Endothelial cell of umbilical vein (primary cell): ENCODE measurements at regions of chr2 and their contacts with region 1.

Region 1: DNA sequence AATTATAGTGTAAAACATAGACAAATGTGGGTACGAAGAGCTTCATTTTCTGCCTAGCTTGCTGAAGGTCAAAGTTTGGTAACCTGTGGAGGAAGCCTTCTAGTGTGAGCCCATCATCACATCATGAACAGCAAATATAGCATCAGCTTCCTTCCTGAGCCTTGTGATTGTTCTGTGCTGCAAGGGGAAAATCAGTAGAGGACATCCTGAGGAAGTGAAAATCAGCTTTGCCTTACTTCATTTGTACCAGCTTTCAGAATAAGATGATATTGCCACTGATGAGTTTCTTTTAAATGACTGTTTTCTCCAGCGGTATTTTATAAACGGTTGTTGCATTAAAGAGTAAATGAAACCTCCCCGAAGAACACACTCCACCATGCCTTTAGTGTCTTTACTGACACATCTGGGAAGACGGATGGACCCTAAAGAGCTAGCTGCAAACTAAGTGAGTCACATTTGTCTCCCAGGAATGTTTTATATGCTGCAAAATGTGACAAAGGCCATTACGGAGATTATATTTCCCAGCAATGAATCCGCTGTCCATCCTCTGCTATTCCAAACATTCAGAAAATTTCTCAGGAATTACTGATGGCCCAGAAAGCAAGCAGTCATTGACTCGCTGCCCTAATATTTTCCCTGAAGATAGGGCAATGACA is 1272.8 kb downstream of the SUCLG1 start:
- DNase-seq: peak; percentile 84
- H3K4me3 ChIP-seq: peak overlapping the region in 2 of 3 experiments; percentile 5 to 41
- H3K27ac ChIP-seq: peak overlapping the region; percentile 84
- H3K4me1 ChIP-seq: peaks cover 24% of the 10 kb centered on the region
- H3K27me3 ChIP-seq: no peaks in the 10 kb centered on the region
- CTCF ChIP-seq: no peak
- POLR2A ChIP-seq: no peak

Region 2: DNA sequence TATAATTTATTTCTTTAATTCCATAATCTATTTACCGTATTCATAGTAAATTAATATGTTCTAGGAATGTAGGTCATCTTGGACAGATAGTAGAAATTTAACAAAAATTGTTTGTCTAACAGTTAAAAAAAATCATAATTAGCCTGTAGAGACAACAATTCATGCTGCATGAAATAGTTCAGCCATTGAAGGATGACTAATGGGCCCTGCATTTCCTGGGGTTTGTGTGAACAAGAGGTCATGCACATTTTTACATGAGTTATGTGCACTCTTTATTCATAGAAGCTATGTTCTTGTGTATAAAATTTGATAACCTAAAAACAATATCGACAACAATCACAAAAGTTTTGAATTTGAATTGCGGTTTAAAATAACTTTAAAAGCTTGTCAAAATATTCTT is 390.8 kb before region 1 on chr2:
- CTCF ChIA-PET with region 1: interaction called, 3 read pairs
- POLR2A ChIA-PET with region 1: interaction called, 3 read pairs
- dilution Hi-C with region 1: no loop called
- intact Hi-C with region 1: loop called (anchors 1 kb)
- DNase-seq: peak; percentile 87
- H3K4me3 ChIP-seq: peak overlapping the region in 1 of 3 experiments; percentile 55
- H3K27ac ChIP-seq: peak overlapping the region; percentile 93
- H3K4me1 ChIP-seq: peaks cover 21% of the 10 kb centered on the region
- H3K27me3 ChIP-seq: no peaks in the 10 kb centered on the region
- CTCF ChIP-seq: no peak
- POLR2A ChIP-seq: peak; percentile 22

Region 3: GRCh38 chr2:82939211-82939610 is 247.0 kb before region 1 on chr2:
- CTCF ChIA-PET with region 1: no interaction called
- POLR2A ChIA-PET with region 1: no interaction called
- dilution Hi-C with region 1: no loop called
- intact Hi-C with region 1: no loop called
- DNase-seq: no peak
- H3K4me3 ChIP-seq: no peak overlapping the region
- H3K27ac ChIP-seq: no peak overlapping the region
- H3K4me1 ChIP-seq: no peaks in the 10 kb centered on the region
- H3K27me3 ChIP-seq: no peaks in the 10 kb centered on the region
- CTCF ChIP-seq: no peak
- POLR2A ChIP-seq: no peak

Region 4: DNA sequence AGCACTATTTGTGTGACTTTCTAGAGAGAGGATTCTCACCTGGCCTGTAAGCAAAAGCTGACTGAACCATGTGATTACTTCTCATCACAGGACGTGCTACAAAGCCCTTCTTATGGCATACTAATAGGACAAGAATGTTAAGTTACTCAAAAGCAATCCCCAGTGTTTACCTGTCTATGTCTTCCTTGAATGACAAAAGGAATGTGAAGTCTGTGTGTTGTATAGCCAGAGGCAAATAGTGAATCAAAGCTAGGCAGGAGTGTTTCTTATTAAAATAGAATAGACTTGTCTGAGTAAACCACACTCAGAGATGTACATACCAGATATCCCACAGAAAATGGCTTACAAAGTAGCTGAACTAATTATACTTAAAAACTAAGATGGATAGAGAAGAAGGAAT is 192.6 kb before region 1 on chr2:
- CTCF ChIA-PET with region 1: no interaction called
- POLR2A ChIA-PET with region 1: no interaction called
- dilution Hi-C with region 1: no loop called
- intact Hi-C with region 1: loop called (anchors 5 kb)
- DNase-seq: no peak
- H3K4me3 ChIP-seq: no peak overlapping the region
- H3K27ac ChIP-seq: no peak overlapping the region
- H3K4me1 ChIP-seq: no peaks in the 10 kb centered on the region
- H3K27me3 ChIP-seq: no peaks in the 10 kb centered on the region
- CTCF ChIP-seq: no peak
- POLR2A ChIP-seq: no peak

Region 5: GRCh38 chr2:83055338-83056010 is 130.8 kb before region 1 on chr2:
- CTCF ChIA-PET with region 1: no interaction called
- POLR2A ChIA-PET with region 1: no interaction called
- dilution Hi-C with region 1: no loop called
- intact Hi-C with region 1: loop called (anchors 1 kb)
- DNase-seq: peak; percentile 93
- H3K4me3 ChIP-seq: peak overlapping the region in 1 of 3 experiments; percentile 15
- H3K27ac ChIP-seq: peak overlapping the region; percentile 97
- H3K4me1 ChIP-seq: peaks cover 36% of the 10 kb centered on the region
- H3K27me3 ChIP-seq: no peaks in the 10 kb centered on the region
- CTCF ChIP-seq: no peak
- POLR2A ChIP-seq: no peak

Region 6: DNA sequence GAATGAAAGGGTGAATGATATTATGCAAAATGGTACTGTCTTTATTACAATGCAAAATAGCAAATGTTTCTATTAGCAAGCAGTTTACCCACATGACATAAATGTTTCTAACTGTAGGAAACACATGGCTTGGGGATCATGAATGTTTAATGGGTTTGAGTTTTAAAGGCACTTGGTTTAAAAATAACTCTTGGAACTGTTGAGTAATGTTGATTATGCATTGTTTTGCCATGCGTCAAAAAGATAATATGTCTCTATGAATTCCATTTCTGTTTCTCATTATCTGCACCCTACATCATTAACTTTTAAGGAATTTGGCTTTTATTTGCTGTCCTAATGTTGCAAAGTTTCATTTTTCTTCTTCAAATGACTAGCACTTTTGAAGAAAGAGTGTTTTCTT is 82.6 kb before region 1 on chr2:
- CTCF ChIA-PET with region 1: no interaction called
- POLR2A ChIA-PET with region 1: interaction called, 3 read pairs
- dilution Hi-C with region 1: no loop called
- intact Hi-C with region 1: loop called (anchors 1 kb)
- DNase-seq: peak; percentile 91
- H3K4me3 ChIP-seq: no peak overlapping the region
- H3K27ac ChIP-seq: peak overlapping the region; percentile 86
- H3K4me1 ChIP-seq: peaks cover 24% of the 10 kb centered on the region
- H3K27me3 ChIP-seq: no peaks in the 10 kb centered on the region
- CTCF ChIP-seq: no peak
- POLR2A ChIP-seq: no peak

Region 7: DNA sequence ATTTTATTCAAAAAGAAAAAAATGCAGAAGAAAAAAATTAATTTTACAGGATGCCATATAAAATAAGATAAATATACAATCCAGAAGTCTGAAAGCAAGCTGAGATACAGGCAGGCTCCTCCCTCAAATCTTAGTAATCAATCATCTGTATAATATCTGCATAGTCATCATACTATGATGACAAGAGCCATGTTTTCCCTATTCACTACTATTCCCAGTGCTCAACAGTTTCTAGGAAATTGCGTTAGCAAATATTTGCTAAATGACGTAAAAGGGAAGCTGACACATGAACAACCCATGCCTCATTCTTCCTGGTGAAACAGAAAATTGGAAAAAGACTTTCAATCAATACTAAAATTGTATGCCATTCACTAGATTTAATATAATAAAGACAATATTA is 479.7 kb after region 1 on chr2:
- CTCF ChIA-PET with region 1: no interaction called
- POLR2A ChIA-PET with region 1: no interaction called
- dilution Hi-C with region 1: no loop called
- intact Hi-C with region 1: loop called (anchors 1 kb)
- DNase-seq: peak; percentile 75
- H3K4me3 ChIP-seq: no peak overlapping the region
- H3K27ac ChIP-seq: peak overlapping the region; percentile 87
- H3K4me1 ChIP-seq: peaks cover 7% of the 10 kb centered on the region
- H3K27me3 ChIP-seq: no peaks in the 10 kb centered on the region
- CTCF ChIP-seq: no peak
- POLR2A ChIP-seq: no peak